Heart right ventricle (tissue), 16 donors: ENCODE measurements at regions of chr18 and their contacts with region 1.

Region 1: DNA sequence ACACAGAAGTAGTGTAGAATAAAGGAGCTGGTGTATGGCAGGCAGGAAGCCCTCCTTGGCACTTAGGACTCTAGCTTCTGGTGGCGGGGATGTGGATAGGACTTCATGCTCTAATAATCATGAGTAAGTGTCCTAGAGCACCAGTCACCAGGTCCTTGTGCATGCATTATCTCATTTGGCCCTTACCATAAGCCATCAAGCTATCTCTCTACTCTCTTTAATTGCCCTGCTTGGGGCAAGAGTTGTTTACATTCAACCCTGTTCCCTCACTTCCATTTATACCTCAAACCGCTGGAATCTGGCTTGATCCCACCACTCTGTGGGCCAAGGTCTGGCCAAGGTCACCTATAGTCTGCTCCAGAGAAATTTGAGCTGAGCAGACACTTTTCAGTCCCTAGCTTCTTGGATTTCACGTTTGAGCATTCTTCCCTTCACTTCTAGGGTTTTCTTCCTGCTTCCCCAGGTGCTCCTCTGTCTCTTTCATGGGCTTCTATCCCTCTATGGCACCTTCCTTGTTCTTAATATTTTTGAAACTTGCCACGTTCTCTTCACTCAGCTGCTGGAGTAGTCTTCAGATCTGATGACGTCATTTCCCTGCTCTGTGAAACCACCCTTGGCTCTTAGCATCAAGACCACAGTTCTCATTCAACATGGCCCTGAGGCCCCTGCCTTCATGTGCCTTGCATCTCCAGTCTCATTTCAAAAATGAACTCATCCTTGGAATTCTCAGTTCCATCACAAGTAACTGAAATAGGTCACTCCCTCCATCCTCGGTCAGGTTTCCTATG is 94.9 kb upstream of the GATA6 start:
- DNase-seq: no peak
- ATAC-seq: no peak
- H3K4me3 ChIP-seq: no peak overlapping the region
- H3K27ac ChIP-seq: no peak overlapping the region
- H3K4me1 ChIP-seq: no peaks in the 10 kb centered on the region
- H3K27me3 ChIP-seq: no peaks in the 10 kb centered on the region
- CTCF ChIP-seq: no peak

Region 2: GRCh38 chr18:22020127-22020866 is 54.2 kb before region 1 on chr18:
- intact Hi-C with region 1: loop called in 1 of 10 experiments (anchors 5 kb)
- DNase-seq: no peak
- ATAC-seq: no peak
- H3K4me3 ChIP-seq: no peak overlapping the region
- H3K27ac ChIP-seq: no peak overlapping the region
- H3K4me1 ChIP-seq: no peaks in the 10 kb centered on the region
- H3K27me3 ChIP-seq: no peaks in the 10 kb centered on the region
- CTCF ChIP-seq: no peak

Region 3: DNA sequence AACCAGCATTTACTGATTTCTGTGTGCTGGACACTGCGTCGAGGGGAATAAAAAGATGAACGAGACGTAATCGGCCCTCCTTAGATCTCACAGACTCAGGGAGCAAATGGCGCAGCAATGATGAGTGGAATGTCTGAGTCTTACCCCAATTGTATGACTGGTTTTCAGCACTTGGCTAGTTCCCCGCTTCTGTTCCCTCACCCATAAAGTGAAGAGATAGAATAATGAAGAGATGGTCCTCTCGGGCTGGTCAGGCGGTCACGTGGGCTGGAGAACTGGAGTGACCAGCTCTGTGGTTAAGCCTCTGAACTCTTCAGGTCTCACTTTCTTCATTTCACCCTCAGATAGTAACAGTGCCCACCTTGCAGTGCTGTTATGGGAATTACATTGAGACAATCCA is 77.7 kb after region 1 on chr18:
- intact Hi-C with region 1: no loop called
- DNase-seq: no peak
- ATAC-seq: peak in 1 of 8 donors; percentile 31
- H3K4me3 ChIP-seq: no peak overlapping the region
- H3K27ac ChIP-seq: no peak overlapping the region
- H3K4me1 ChIP-seq: no peaks in the 10 kb centered on the region
- H3K27me3 ChIP-seq: no peaks in the 10 kb centered on the region
- CTCF ChIP-seq: no peak